Naive thymus-derived CD4-positive, alpha-beta T cell (primary cell): ENCODE measurements at regions of chr2 and their contacts with region 1.

Region 1: GRCh38 chr2:68214381-68214780 is 38.0 kb downstream of the PPP3R1 start:
- DNase-seq: no peak
- ATAC-seq: no peak
- H3K4me3 ChIP-seq: no peak overlapping the region
- H3K4me3 Mint-ChIP-seq: no peak overlapping the region
- H3K27ac ChIP-seq: no peak overlapping the region
- H3K27ac Mint-ChIP-seq: peak overlapping the region in 8 of 9 donors; percentile 8 to 71 (median 40)
- H3K4me1 ChIP-seq: peaks cover 5 to 18% of the 10 kb centered on the region in 2 donors
- H3K4me1 Mint-ChIP-seq: peaks cover 41 to 86% (median 80%) of the 10 kb centered on the region in 7 donors
- H3K27me3 ChIP-seq: no peaks in the 10 kb centered on the region
- H3K27me3 Mint-ChIP-seq: no peaks in the 10 kb centered on the region

Region 2: DNA sequence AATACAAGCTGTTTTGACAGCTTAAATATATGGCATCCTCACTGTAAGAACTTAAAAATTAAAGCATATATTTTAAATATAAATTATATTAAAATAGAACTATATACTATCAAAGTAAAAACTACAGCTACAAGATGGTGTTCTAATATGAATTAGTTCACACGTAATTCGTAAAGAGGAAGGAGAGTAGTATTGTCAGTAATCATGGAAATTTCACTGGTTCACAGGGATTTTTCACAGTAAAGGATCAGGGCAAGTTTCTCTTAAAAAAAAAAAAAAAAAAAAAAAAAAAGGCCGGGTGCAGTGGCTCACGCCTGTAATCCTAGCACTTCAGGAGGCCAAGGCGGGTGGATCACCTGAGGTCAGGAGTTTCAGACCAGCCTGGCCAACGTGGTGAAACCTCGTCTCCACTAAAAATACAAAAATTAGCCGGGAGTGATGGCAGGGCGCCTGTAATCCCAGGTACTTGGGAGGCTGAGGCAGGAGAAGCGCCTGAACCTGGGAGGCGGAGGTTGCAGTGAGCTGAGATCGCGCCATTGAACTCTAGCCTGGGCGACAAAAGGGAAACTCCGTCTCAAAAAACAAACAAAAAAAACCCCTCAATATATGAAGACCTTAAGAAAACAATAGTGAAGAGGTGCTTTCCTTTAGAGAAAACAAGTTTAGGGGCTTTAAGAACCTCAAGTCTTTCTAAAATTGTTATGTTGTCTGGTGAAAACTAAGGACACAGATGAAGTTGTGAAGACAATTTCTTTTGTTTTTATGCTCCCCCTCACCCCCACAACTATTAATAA is 24.2 kb before region 1 on chr2:
- CTCF ChIA-PET with region 1: no interaction called
- POLR2A ChIA-PET with region 1: no interaction called
- intact Hi-C with region 1: no loop called
- DNase-seq: no peak
- ATAC-seq: no peak
- H3K4me3 ChIP-seq: no peak overlapping the region
- H3K4me3 Mint-ChIP-seq: peak overlapping the region in 6 of 10 donors; percentile 14 to 63 (median 20)
- H3K27ac ChIP-seq: peak overlapping the region; percentile 18
- H3K27ac Mint-ChIP-seq: peak overlapping the region in 7 of 9 donors; percentile 25 to 90 (median 59)
- H3K4me1 ChIP-seq: no peaks in the 10 kb centered on the region
- H3K4me1 Mint-ChIP-seq: peaks cover 28 to 95% (median 76%) of the 10 kb centered on the region in 7 donors
- H3K27me3 ChIP-seq: no peaks in the 10 kb centered on the region
- H3K27me3 Mint-ChIP-seq: no peaks in the 10 kb centered on the region

Region 3: DNA sequence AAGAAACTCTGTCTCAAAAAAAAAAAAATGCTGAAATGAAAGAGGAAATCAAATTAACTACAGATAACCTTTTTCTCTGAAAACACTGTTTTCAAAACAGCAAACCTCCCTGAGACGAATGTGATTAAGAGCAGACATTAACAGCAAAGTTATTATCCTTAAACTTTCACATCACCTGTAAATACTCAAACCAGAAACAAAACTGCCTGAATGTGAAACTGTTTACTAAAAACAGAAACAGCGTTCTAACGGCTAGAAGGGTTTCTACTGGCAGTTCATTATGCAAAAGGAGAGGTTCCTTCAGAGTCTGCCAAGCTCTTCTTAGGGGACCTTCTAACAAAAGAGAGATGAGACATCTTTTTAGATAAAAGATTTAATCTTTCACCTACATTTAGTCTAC is 10.8 kb before region 1 on chr2:
- CTCF ChIA-PET with region 1: interaction called, 4 read pairs
- POLR2A ChIA-PET with region 1: interaction called, 4 read pairs
- intact Hi-C with region 1: loop called in 1 of 2 experiments (anchors 2 kb)
- DNase-seq: peak in 3 of 9 donors; percentile 8 to 19 (median 16)
- ATAC-seq: peak; percentile 60
- H3K4me3 ChIP-seq: no peak overlapping the region
- H3K4me3 Mint-ChIP-seq: peak overlapping the region in 9 of 10 donors; percentile 56 to 83 (median 72)
- H3K27ac ChIP-seq: peak overlapping the region; percentile 38
- H3K27ac Mint-ChIP-seq: peak overlapping the region; percentile 53 to 90 (median 83)
- H3K4me1 ChIP-seq: peaks cover 28 to 35% of the 10 kb centered on the region in 2 donors
- H3K4me1 Mint-ChIP-seq: peaks cover 53 to 94% (median 81%) of the 10 kb centered on the region in 7 donors
- H3K27me3 ChIP-seq: no peaks in the 10 kb centered on the region
- H3K27me3 Mint-ChIP-seq: no peaks in the 10 kb centered on the region